ENCODE measurements at regions of chr11 and their contacts with region 1.

Region 1: DNA sequence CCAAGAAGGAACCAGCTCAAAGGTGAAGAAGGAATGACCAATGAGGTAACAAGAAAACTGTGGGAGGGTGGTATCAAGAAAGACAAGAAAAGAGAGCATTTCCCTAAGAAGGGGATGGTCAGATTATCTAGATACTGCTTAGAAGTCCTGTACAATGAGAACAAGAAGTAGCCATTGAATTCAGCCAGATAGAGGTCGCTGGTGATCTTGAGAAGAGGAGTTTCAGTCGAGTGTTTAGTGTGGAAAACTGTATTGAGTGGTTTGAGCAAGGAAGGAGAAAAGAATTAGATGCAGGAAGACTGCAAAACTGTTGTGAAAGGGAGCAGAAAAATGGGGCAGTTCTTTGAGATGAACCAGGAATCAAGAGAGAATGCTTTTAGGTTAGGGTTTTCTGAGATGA is 74.6 kb upstream of the FAT3 start:
- DNase-seq: no peak
- H3K4me3 Mint-ChIP-seq: no peak overlapping the region
- H3K27ac Mint-ChIP-seq: no peak overlapping the region
- H3K4me1 Mint-ChIP-seq: no peaks in the 10 kb centered on the region
- H3K27me3 Mint-ChIP-seq: no peaks in the 10 kb centered on the region
- CTCF ChIP-seq: no peak

Region 2: DNA sequence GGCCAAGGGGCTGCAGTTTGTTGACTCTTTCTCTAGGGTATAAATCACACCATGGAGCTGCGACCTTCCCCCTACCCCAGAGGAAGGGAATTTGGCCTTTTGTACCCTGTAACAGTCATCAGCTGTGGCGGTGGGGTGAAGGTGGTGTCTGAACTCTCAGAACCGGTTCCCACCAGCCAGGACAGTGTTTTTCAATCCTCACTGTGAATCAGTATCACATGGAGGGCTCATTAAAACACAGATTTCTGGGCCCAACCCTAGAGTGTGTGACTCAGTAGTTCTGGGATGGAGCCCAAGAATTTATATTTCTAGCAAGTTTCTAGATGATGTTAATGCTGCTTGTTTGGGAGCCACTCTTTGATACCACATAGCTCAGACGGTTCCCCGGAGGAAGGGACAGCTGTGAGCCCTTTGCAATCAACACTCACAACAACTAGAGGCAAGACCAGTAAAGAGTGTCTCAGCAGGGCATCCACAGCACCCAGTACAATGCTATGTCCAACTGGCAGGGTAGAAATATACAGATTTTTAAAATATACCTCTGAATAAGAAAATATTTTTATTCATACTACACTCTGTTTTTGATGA is 30.8 kb after region 1 on chr11:
- CTCF ChIA-PET with region 1: no interaction called
- intact Hi-C with region 1: loop called (anchors 2 kb)
- DNase-seq: no peak
- H3K4me3 Mint-ChIP-seq: no peak overlapping the region
- H3K27ac Mint-ChIP-seq: no peak overlapping the region
- H3K4me1 Mint-ChIP-seq: no peaks in the 10 kb centered on the region
- H3K27me3 Mint-ChIP-seq: no peaks in the 10 kb centered on the region
- CTCF ChIP-seq: no peak